Esophagus muscularis mucosa (tissue), 4 donors: ENCODE measurements at regions of chr13 and their contacts with region 1.

Region 1: DNA sequence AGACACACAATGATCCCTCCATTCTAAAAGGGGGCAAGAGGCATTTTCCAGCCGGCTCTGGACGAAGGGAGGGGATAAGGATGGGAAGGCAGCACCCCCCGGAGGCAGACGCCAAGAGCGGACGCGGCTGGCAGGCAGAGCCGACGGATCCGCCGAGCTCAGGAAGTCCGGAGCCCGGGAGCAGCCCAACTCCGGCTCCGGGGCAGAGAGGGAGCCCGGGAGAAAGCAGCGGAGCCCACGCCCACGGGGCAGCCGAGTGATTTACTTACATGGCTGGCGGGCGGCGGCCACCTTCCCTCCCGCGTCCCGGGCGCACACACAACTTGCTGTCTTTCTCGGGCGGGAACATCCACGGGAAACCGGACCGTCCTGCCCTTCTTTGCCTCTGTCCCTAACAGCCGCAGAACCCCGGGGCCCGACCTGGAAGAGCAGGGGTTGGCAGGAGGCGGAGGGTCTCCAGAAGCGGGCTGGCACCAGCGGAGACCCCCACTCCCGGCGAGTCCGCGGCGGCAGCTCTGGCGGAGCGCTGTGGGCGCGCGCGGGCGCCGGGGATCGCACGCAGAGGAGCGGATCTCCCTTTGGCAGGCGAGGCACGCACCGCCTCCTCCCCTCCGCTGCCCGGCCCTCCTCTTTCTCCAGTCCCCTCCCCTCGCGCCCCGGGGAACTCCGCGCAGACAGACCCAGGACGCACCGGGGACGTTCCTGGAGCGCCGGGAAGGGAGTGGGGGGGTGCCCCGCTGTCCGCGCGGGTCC is at the start of gene LHFPL6:
- DNase-seq: peak; percentile 95
- H3K4me3 ChIP-seq: peak within 1 kb of the TSS; percentile 76 to 95 (median 84)
- H3K27ac ChIP-seq: peak within 1 kb of the TSS; percentile 88 to 94 (median 91)
- H3K4me1 ChIP-seq: peaks cover 38 to 52% (median 50%) of the 10 kb centered on the region in 4 donors
- H3K27me3 ChIP-seq: no peaks in the 10 kb centered on the region
- CTCF ChIP-seq: peak in 2 of 3 experiments; percentile 27 to 32
- EP300 ChIP-seq: no peak
- POLR2A ChIP-seq: peak; percentile 56
- total RNA-seq, gene LHFPL6: 55.6 to 75.9 (median 72.0) TPM

Region 2: GRCh38 chr13:39415008-39415802 is 187.6 kb before region 1 on chr13:
- intact Hi-C with region 1: loop called (anchors 5 kb)
- DNase-seq: no peak
- H3K4me3 ChIP-seq: peak overlapping the region in 2 of 4 donors; percentile 1 to 6
- H3K27ac ChIP-seq: peak overlapping the region; percentile 13 to 58 (median 47)
- H3K4me1 ChIP-seq: peaks cover 51 to 76% (median 56%) of the 10 kb centered on the region in 4 donors
- H3K27me3 ChIP-seq: no peaks in the 10 kb centered on the region
- CTCF ChIP-seq: peak; percentile 45 to 63 (median 51)
- EP300 ChIP-seq: no peak
- POLR2A ChIP-seq: no peak

Region 3: DNA sequence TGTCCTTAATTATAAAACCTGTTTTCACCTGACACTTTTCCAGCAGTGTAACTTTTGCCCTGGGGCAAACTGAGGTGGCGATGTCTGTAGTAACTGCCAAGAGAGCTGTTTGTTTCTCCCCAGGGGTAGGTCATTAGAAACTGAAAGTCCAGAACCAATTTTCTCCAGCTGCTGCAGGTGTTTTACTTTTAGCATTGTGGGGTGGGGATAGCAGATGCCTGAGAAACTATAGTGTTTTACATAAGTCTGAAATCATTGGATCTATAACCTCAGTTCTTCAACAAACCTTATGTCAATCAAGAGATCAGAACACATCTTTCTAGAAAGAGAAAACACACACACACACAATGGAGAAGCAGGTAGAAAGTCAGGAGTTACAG is 92.5 kb before region 1 on chr13:
- intact Hi-C with region 1: no loop called
- DNase-seq: no peak
- H3K4me3 ChIP-seq: no peak overlapping the region
- H3K27ac ChIP-seq: no peak overlapping the region
- H3K4me1 ChIP-seq: peaks cover 10 to 33% (median 19%) of the 10 kb centered on the region in 4 donors
- H3K27me3 ChIP-seq: no peaks in the 10 kb centered on the region
- CTCF ChIP-seq: no peak
- EP300 ChIP-seq: no peak
- POLR2A ChIP-seq: no peak